ENCODE measurements at regions of chr2 and their contacts with region 1.

Region 1: GRCh38 chr2:234500394-234501006 is 3.6 kb upstream of the ARL4C start:
- DNase-seq: peak; percentile 49
- H3K4me3 ChIP-seq: no peak overlapping the region
- H3K27ac ChIP-seq: no peak overlapping the region
- H3K4me1 ChIP-seq: peaks cover 3 to 16% (median 6%) of the 10 kb centered on the region in 3 donors
- H3K27me3 ChIP-seq: peaks cover 0 to 7% (median 0%) of the 10 kb centered on the region in 4 donors
- CTCF ChIP-seq: peak; percentile 26 to 75 (median 58)
- POLR2A ChIP-seq: no peak

Region 2: GRCh38 chr2:233976690-233977294 is 523.7 kb before region 1 on chr2:
- intact Hi-C with region 1: loop called (anchors 10 kb)
- DNase-seq: no peak
- H3K4me3 ChIP-seq: no peak overlapping the region
- H3K27ac ChIP-seq: no peak overlapping the region
- H3K4me1 ChIP-seq: peaks cover 5 to 41% (median 6%) of the 10 kb centered on the region in 3 donors
- H3K27me3 ChIP-seq: peaks cover 0 to 59% (median 0%) of the 10 kb centered on the region in 4 donors
- CTCF ChIP-seq: peak in 5 of 6 experiments; percentile 29 to 52 (median 44)
- POLR2A ChIP-seq: no peak

Region 3: DNA sequence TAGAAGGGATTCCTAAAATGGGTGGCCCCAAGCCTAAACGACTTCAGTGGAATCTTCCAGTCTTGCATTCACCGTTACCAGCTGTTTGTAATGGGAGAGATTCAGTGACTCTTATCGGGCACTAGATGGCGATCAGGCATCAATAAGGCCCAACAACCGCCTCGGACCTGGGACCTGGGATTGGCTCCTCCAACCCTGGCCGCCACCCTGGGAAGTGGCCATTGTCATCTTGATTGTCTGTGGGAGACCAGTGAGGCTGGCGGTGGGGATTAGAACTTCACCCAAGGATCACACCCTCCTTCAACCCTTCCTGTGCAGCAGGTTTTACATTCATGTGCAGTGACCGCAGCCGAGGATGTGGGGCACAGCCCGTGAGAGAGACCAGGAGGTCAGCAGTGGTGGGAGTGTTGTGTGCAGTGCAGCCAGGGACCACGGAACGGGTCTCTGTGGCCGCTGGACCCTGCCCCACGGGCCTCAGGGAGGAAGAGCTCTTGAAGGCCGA is 364.7 kb before region 1 on chr2:
- intact Hi-C with region 1: loop called (anchors 5 kb)
- DNase-seq: no peak
- H3K4me3 ChIP-seq: no peak overlapping the region
- H3K27ac ChIP-seq: peak overlapping the region in 2 of 4 donors; percentile 42
- H3K4me1 ChIP-seq: peaks cover 3 to 52% (median 11%) of the 10 kb centered on the region in 3 donors
- H3K27me3 ChIP-seq: peaks cover 0 to 22% (median 0%) of the 10 kb centered on the region in 4 donors
- CTCF ChIP-seq: peak; percentile 69 to 89 (median 74)
- POLR2A ChIP-seq: no peak

Region 4: DNA sequence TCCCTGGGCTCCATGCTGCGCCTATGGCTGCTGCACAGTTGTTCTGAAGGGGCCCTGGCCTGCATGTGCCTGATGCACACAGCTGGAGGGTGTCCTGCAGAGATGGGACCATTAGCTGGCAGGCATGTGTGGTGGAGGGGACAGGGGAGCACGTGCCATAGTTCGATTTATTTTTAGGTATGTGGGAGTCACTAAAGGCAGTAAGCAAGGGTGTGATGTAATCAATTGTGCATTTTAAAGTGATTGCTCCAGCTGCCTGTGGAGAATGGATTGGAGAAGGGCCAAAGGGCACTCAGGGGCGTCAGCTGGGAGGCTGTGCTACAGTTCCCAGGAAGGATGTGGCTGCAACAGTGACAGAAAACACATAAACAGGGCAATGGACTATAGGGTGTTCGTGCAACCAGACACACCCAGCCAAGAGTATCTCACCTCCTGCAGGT is 208.7 kb before region 1 on chr2:
- intact Hi-C with region 1: loop called (anchors 5 kb)
- DNase-seq: no peak
- H3K4me3 ChIP-seq: no peak overlapping the region
- H3K27ac ChIP-seq: peak overlapping the region; percentile 30 to 80 (median 61)
- H3K4me1 ChIP-seq: peaks cover 10 to 34% (median 15%) of the 10 kb centered on the region in 3 donors
- H3K27me3 ChIP-seq: no peaks in the 10 kb centered on the region
- CTCF ChIP-seq: no peak
- POLR2A ChIP-seq: no peak

Measured in esophagus squamous epithelium (tissue), 5 donors.